ENCODE measurements at regions of chr6 and their contacts with region 1.

Region 1: GRCh38 chr6:112087136-112087911 is at the starts of genes FAM229B and TUBE1:
- DNase-seq: peak; percentile 70 to 96 (median 90)
- ATAC-seq: peak; percentile 98
- H3K4me3 ChIP-seq: peak within 1 kb of the TSS; percentile 64
- H3K4me3 Mint-ChIP-seq: no peak within 1 kb of the TSS
- H3K27ac ChIP-seq: peak within 1 kb of the TSS; percentile 87
- H3K27ac Mint-ChIP-seq: peak within 1 kb of the TSS in 1 of 9 donors; percentile 65
- H3K4me1 ChIP-seq: peaks cover 0 to 7% of the 10 kb centered on the region in 2 donors
- H3K4me1 Mint-ChIP-seq: peaks cover 0 to 18% (median 10%) of the 10 kb centered on the region in 7 donors
- H3K27me3 ChIP-seq: peaks cover 0 to 3% of the 10 kb centered on the region in 2 donors
- H3K27me3 Mint-ChIP-seq: peaks cover 0 to 37% (median 6%) of the 10 kb centered on the region in 5 donors
- total RNA-seq, gene FAM229B: 0.70 to 5.8 (median 2.0) TPM
- total RNA-seq, gene TUBE1: 19.3 to 50.0 (median 35.1) TPM

Region 2: GRCh38 chr6:110981202-110981600 is 1106.1 kb before region 1 on chr6:
- CTCF ChIA-PET with region 1: no interaction called
- POLR2A ChIA-PET with region 1: no interaction called
- intact Hi-C with region 1: loop called (anchors 1 kb)
- DNase-seq: peak in 1 of 9 donors; percentile 28
- ATAC-seq: no peak
- H3K4me3 ChIP-seq: peak overlapping the region; percentile 81
- H3K4me3 Mint-ChIP-seq: peak overlapping the region; percentile 95 to 99 (median 98)
- H3K27ac ChIP-seq: peak overlapping the region; percentile 92
- H3K27ac Mint-ChIP-seq: peak overlapping the region; percentile 96 to 100 (median 99)
- H3K4me1 ChIP-seq: peaks cover 0 to 11% of the 10 kb centered on the region in 2 donors
- H3K4me1 Mint-ChIP-seq: peaks cover 19 to 46% (median 35%) of the 10 kb centered on the region in 7 donors
- H3K27me3 ChIP-seq: no peaks in the 10 kb centered on the region
- H3K27me3 Mint-ChIP-seq: no peaks in the 10 kb centered on the region

Region 3: DNA sequence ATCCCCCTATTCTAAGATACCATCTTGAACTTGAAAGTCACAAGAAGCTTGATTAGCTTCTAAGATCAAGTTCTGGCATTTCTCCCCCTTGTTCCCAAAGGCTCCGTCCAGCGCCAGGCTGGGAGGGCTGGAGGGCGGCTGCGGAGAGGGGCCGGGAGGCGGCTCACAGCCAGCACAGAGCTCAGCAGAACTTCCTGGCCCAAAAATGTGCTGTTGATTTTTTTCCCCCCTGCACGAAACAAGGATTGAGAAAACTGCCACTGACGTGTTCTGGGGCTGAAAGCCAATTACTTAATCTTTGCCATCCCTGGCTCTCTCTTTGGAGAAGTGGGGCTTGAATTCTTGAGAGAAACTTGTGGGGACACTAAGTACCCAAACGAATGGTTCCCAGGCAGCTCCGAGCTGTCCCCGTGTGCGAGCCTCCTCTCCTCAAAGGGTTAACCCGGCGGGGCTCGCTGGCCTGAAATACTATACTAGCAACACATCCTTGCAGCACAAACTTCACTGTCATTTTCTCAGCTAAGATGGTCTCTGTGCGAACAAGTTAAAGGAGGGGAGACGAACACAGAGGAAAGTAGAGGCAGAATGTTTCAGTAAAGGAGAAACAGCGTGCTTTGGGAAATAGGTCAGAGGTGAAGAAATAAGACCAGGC is 482.1 kb before region 1 on chr6:
- CTCF ChIA-PET with region 1: no interaction called
- POLR2A ChIA-PET with region 1: interaction called, 7 read pairs
- intact Hi-C with region 1: loop called (anchors 1 kb)
- DNase-seq: peak in 8 of 9 donors; percentile 12 to 60 (median 34)
- ATAC-seq: peak; percentile 56
- H3K4me3 ChIP-seq: peak overlapping the region; percentile 85
- H3K4me3 Mint-ChIP-seq: peak overlapping the region; percentile 89 to 97 (median 94)
- H3K27ac ChIP-seq: peak overlapping the region; percentile 84
- H3K27ac Mint-ChIP-seq: peak overlapping the region; percentile 90 to 98 (median 95)
- H3K4me1 ChIP-seq: peaks cover 13 to 15% of the 10 kb centered on the region in 2 donors
- H3K4me1 Mint-ChIP-seq: peaks cover 25 to 61% (median 58%) of the 10 kb centered on the region in 7 donors
- H3K27me3 ChIP-seq: no peaks in the 10 kb centered on the region
- H3K27me3 Mint-ChIP-seq: peaks cover 0 to 2% (median 0%) of the 10 kb centered on the region in 5 donors

Region 4: GRCh38 chr6:112163295-112164257 is 76.3 kb after region 1 on chr6:
- CTCF ChIA-PET with region 1: interaction called, 9 read pairs
- POLR2A ChIA-PET with region 1: no interaction called
- intact Hi-C with region 1: loop called (anchors 1 kb)
- DNase-seq: peak; percentile 43 to 81 (median 64)
- ATAC-seq: peak; percentile 97
- H3K4me3 ChIP-seq: no peak overlapping the region
- H3K4me3 Mint-ChIP-seq: peak overlapping the region; percentile 49 to 88 (median 79)
- H3K27ac ChIP-seq: no peak overlapping the region
- H3K27ac Mint-ChIP-seq: peak overlapping the region in 7 of 9 donors; percentile 10 to 79 (median 48)
- H3K4me1 ChIP-seq: peaks cover 3 to 7% of the 10 kb centered on the region in 2 donors
- H3K4me1 Mint-ChIP-seq: peaks cover 9 to 18% (median 14%) of the 10 kb centered on the region in 7 donors
- H3K27me3 ChIP-seq: no peaks in the 10 kb centered on the region
- H3K27me3 Mint-ChIP-seq: peaks cover 25 to 60% (median 48%) of the 10 kb centered on the region in 5 donors

Region 5: GRCh38 chr6:113970805-113971676 is 1883.7 kb after region 1 on chr6 and contains the start of gene HDAC2:
- CTCF ChIA-PET with region 1: no interaction called
- POLR2A ChIA-PET with region 1: no interaction called
- intact Hi-C with region 1: loop called in 1 of 2 experiments (anchors 2 kb)
- DNase-seq: peak; percentile 77 to 91 (median 85)
- ATAC-seq: peak; percentile 90
- H3K4me3 ChIP-seq: peak within 1 kb of the TSS; percentile 96
- H3K4me3 Mint-ChIP-seq: peak within 1 kb of the TSS; percentile 91 to 99 (median 97)
- H3K27ac ChIP-seq: peak within 1 kb of the TSS; percentile 92
- H3K27ac Mint-ChIP-seq: peak within 1 kb of the TSS; percentile 86 to 99 (median 97)
- H3K4me1 ChIP-seq: peaks cover 15 to 18% of the 10 kb centered on the region in 2 donors
- H3K4me1 Mint-ChIP-seq: peaks cover 24 to 46% (median 39%) of the 10 kb centered on the region in 7 donors
- H3K27me3 ChIP-seq: no peaks in the 10 kb centered on the region
- H3K27me3 Mint-ChIP-seq: peaks cover 0 to 6% (median 0%) of the 10 kb centered on the region in 5 donors
- total RNA-seq, gene HDAC2: 46.6 to 72.0 (median 54.7) TPM

Measured in naive thymus-derived CD4-positive, alpha-beta T cell (primary cell).